Activated CD4-positive, alpha-beta T cell treated with anti-CD3 and anti-CD28 coated beads for 36 hours (primary cell): ENCODE measurements at regions of chr3 and their contacts with region 1.

Region 1: GRCh38 chr3:128051837-128052594 is at the start of gene SEC61A1:
- DNase-seq: peak; percentile 98
- ATAC-seq: peak; percentile 96
- H3K4me3 Mint-ChIP-seq: peak within 1 kb of the TSS; percentile 90
- H3K27ac Mint-ChIP-seq: peak within 1 kb of the TSS; percentile 98
- H3K4me1 Mint-ChIP-seq: peaks cover 34% of the 10 kb centered on the region
- H3K27me3 Mint-ChIP-seq: no peaks in the 10 kb centered on the region
- total RNA-seq, gene SEC61A1: 113 to 123 TPM

Region 2: GRCh38 chr3:126703512-126704462 is 1348.2 kb before region 1 on chr3 and contains the start of gene CHCHD6:
- CTCF ChIA-PET with region 1: no interaction called
- POLR2A ChIA-PET with region 1: no interaction called
- intact Hi-C with region 1: loop called in 1 of 2 experiments (anchors 1 kb)
- DNase-seq: peak; percentile 98
- ATAC-seq: peak; percentile 99
- H3K4me3 Mint-ChIP-seq: peak within 1 kb of the TSS; percentile 92
- H3K27ac Mint-ChIP-seq: peak within 1 kb of the TSS; percentile 82
- H3K4me1 Mint-ChIP-seq: peaks cover 23% of the 10 kb centered on the region
- H3K27me3 Mint-ChIP-seq: peaks cover 9% of the 10 kb centered on the region
- total RNA-seq, gene CHCHD6: 17.1 to 17.7 TPM

Region 3: GRCh38 chr3:127672516-127673190 is 379.4 kb before region 1 on chr3 and contains the start of gene ABTB1:
- CTCF ChIA-PET with region 1: no interaction called
- POLR2A ChIA-PET with region 1: no interaction called
- intact Hi-C with region 1: loop called (anchors 1 to 5 kb)
- DNase-seq: peak; percentile 94
- ATAC-seq: peak; percentile 90
- H3K4me3 Mint-ChIP-seq: peak within 1 kb of the TSS; percentile 88
- H3K27ac Mint-ChIP-seq: peak within 1 kb of the TSS; percentile 96
- H3K4me1 Mint-ChIP-seq: peaks cover 22% of the 10 kb centered on the region
- H3K27me3 Mint-ChIP-seq: no peaks in the 10 kb centered on the region
- total RNA-seq, gene ABTB1: 8.3 to 9.6 TPM

Region 4: GRCh38 chr3:128075516-128076482 is 23.8 kb after region 1 on chr3:
- CTCF ChIA-PET with region 1: interaction called, 7 read pairs
- POLR2A ChIA-PET with region 1: no interaction called
- intact Hi-C with region 1: loop called (anchors 1 to 2 kb)
- DNase-seq: peak; percentile 91
- ATAC-seq: peak; percentile 88
- H3K4me3 Mint-ChIP-seq: peak overlapping the region; percentile 44
- H3K27ac Mint-ChIP-seq: no peak overlapping the region
- H3K4me1 Mint-ChIP-seq: peaks cover 21% of the 10 kb centered on the region
- H3K27me3 Mint-ChIP-seq: no peaks in the 10 kb centered on the region

Region 5: GRCh38 chr3:128153156-128154041 is 101.4 kb after region 1 on chr3 and contains the start of gene EEFSEC:
- CTCF ChIA-PET with region 1: no interaction called
- POLR2A ChIA-PET with region 1: no interaction called
- intact Hi-C with region 1: loop called (anchors 1 to 5 kb)
- DNase-seq: peak; percentile 91
- ATAC-seq: peak; percentile 95
- H3K4me3 Mint-ChIP-seq: peak within 1 kb of the TSS; percentile 80
- H3K27ac Mint-ChIP-seq: peak within 1 kb of the TSS; percentile 85
- H3K4me1 Mint-ChIP-seq: peaks cover 25% of the 10 kb centered on the region
- H3K27me3 Mint-ChIP-seq: no peaks in the 10 kb centered on the region
- total RNA-seq, gene EEFSEC: 19.6 to 20.7 TPM

Region 6: GRCh38 chr3:128725932-128726690 is 674.1 kb after region 1 on chr3 and contains the start of gene RAB7A:
- CTCF ChIA-PET with region 1: no interaction called
- POLR2A ChIA-PET with region 1: no interaction called
- intact Hi-C with region 1: loop called in 1 of 2 experiments (anchors 1 kb)
- DNase-seq: peak; percentile 99
- ATAC-seq: peak; percentile 92
- H3K4me3 Mint-ChIP-seq: peak within 1 kb of the TSS; percentile 89
- H3K27ac Mint-ChIP-seq: peak within 1 kb of the TSS; percentile 92
- H3K4me1 Mint-ChIP-seq: peaks cover 52% of the 10 kb centered on the region
- H3K27me3 Mint-ChIP-seq: no peaks in the 10 kb centered on the region
- total RNA-seq, gene RAB7A: 297 to 534 TPM

Region 7: GRCh38 chr3:129278439-129278970 is 1226.5 kb after region 1 on chr3 and contains the start of gene HMCES:
- CTCF ChIA-PET with region 1: no interaction called
- POLR2A ChIA-PET with region 1: no interaction called
- intact Hi-C with region 1: loop called in 1 of 2 experiments (anchors 2 kb)
- DNase-seq: peak; percentile 98
- ATAC-seq: peak; percentile 84
- H3K4me3 Mint-ChIP-seq: peak within 1 kb of the TSS; percentile 89
- H3K27ac Mint-ChIP-seq: peak within 1 kb of the TSS; percentile 95
- H3K4me1 Mint-ChIP-seq: peaks cover 55% of the 10 kb centered on the region
- H3K27me3 Mint-ChIP-seq: no peaks in the 10 kb centered on the region
- total RNA-seq, gene HMCES: 43.1 to 56.7 TPM